CD4-positive, alpha-beta T cell (primary cell): ENCODE measurements at regions of chr5 and their contacts with region 1.

Region 1: DNA sequence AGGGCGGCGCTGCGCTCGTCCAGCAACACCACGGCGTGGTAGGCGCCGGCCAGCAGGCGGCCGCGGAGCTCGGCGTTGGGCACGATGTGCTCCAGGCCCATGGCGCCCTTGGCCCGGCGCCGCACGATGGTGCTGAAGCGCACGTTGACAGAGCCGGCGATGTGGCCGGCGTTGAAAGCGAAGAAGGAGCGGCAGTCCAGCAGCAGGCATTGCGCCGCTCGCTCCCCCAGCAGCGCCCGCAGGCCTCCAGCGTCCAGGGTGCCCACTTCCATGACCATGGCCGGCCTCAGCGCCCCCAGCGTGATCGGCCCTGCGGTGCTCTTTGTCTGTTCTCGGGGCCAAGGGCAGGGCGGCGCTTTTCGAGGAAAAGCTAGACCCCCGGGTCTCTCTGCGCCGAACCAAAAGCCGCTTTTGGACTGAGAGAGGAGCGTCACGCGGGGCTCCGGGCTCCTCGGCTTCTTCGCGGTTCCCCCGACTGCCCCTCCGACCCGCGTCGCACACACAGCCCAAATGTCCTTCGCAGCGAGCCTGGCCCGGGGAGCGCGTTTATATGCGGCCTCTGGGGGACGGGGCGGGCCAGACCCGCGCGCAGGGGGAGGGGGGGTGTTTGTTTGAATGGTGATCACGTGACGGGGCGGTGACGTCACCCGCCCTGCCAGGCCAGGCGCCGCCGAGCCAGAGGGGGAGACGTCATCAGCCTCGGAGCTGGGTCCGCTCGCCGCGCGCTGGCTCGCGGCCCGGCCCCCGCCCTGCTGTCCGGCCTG is at the start of gene DUSP1:
- DNase-seq: peak; percentile 96 to 100 (median 98)
- ATAC-seq: peak; percentile 45
- H3K4me3 ChIP-seq: peak within 1 kb of the TSS; percentile 95
- H3K4me3 Mint-ChIP-seq: peak within 1 kb of the TSS; percentile 99
- H3K27ac ChIP-seq: peak within 1 kb of the TSS; percentile 100
- H3K27ac Mint-ChIP-seq: peak within 1 kb of the TSS; percentile 95
- H3K4me1 ChIP-seq: peaks cover 87% of the 10 kb centered on the region
- H3K4me1 Mint-ChIP-seq: peaks cover 78% of the 10 kb centered on the region
- H3K27me3 ChIP-seq: no peaks in the 10 kb centered on the region
- H3K27me3 Mint-ChIP-seq: peaks cover 6% of the 10 kb centered on the region
- CTCF ChIP-seq: peak; percentile 33
- total RNA-seq, gene DUSP1: 761 to 768 TPM

Region 2: DNA sequence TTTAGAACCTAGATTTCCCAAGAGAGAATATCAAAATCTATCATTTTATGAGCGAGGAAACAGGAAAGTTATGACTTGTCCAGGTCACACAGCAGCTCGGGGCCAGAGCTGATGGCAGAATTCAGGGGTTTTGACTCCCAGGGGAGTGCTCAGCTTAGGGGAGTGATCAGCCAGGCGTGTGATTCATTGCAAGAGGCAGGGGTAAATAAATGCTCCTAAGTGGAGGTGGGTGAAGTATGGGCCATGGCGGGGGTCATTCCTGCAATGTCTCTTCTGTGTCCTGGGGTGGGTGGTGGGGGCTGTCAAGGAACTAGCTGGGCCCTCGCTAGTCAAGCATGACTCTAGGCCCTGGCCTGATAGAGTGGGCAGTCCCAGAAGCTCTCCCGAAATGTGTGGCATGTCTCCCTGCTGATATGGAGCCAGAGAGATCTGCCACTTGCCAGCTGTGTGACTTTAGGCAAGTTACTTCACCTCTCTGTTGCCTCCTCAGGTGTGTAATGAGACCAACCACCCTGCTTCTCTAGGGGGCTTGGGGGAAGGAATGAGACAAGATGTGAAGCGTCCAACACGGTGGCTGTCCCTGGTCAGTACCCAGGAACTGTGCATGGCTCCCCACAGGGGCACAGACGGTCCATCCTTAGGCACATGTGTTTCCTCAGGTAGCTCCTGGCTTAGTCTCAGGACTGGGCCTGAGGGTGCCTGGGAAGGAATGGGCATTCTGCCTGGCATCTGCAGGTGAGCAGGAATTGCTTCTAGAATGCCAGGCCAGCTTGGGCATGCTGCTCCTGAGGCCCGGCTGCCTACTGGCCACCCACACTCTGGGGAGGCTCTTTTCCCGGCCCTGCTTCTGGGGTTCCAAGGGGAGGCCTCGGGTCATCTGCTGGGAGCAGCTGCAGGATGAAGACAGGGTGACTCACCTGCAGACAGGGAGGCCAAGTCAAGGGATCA is 280.1 kb before region 1 on chr5:
- CTCF ChIA-PET with region 1: no interaction called
- POLR2A ChIA-PET with region 1: no interaction called
- intact Hi-C with region 1: no loop called
- DNase-seq: no peak
- ATAC-seq: no peak
- H3K4me3 ChIP-seq: no peak overlapping the region
- H3K4me3 Mint-ChIP-seq: no peak overlapping the region
- H3K27ac ChIP-seq: no peak overlapping the region
- H3K27ac Mint-ChIP-seq: no peak overlapping the region
- H3K4me1 ChIP-seq: no peaks in the 10 kb centered on the region
- H3K4me1 Mint-ChIP-seq: no peaks in the 10 kb centered on the region
- H3K27me3 ChIP-seq: no peaks in the 10 kb centered on the region
- H3K27me3 Mint-ChIP-seq: peaks cover 13% of the 10 kb centered on the region
- CTCF ChIP-seq: no peak

Region 3: GRCh38 chr5:172683696-172684471 is 87.0 kb before region 1 on chr5:
- CTCF ChIA-PET with region 1: no interaction called
- POLR2A ChIA-PET with region 1: interaction called, 18 read pairs
- intact Hi-C with region 1: no loop called
- DNase-seq: peak; percentile 34 to 89 (median 68)
- ATAC-seq: peak; percentile 83
- H3K4me3 ChIP-seq: peak overlapping the region; percentile 54
- H3K4me3 Mint-ChIP-seq: peak overlapping the region; percentile 81
- H3K27ac ChIP-seq: peak overlapping the region in 1 of 2 donors; percentile 52
- H3K27ac Mint-ChIP-seq: peak overlapping the region; percentile 85
- H3K4me1 ChIP-seq: peaks cover 10% of the 10 kb centered on the region
- H3K4me1 Mint-ChIP-seq: peaks cover 23% of the 10 kb centered on the region
- H3K27me3 ChIP-seq: no peaks in the 10 kb centered on the region
- H3K27me3 Mint-ChIP-seq: no peaks in the 10 kb centered on the region
- CTCF ChIP-seq: no peak

Region 4: GRCh38 chr5:172740428-172741201 is 30.2 kb before region 1 on chr5:
- CTCF ChIA-PET with region 1: no interaction called
- POLR2A ChIA-PET with region 1: no interaction called
- intact Hi-C with region 1: no loop called
- DNase-seq: peak in 2 of 14 experiments; percentile 48 to 63
- ATAC-seq: no peak
- H3K4me3 ChIP-seq: no peak overlapping the region
- H3K4me3 Mint-ChIP-seq: no peak overlapping the region
- H3K27ac ChIP-seq: peak overlapping the region in 1 of 2 donors; percentile 29
- H3K27ac Mint-ChIP-seq: no peak overlapping the region
- H3K4me1 ChIP-seq: peaks cover 13% of the 10 kb centered on the region
- H3K4me1 Mint-ChIP-seq: no peaks in the 10 kb centered on the region
- H3K27me3 ChIP-seq: no peaks in the 10 kb centered on the region
- H3K27me3 Mint-ChIP-seq: no peaks in the 10 kb centered on the region
- CTCF ChIP-seq: no peak

Region 5: GRCh38 chr5:172833686-172834414 is 63.0 kb after region 1 on chr5 and contains the start of gene ERGIC1:
- CTCF ChIA-PET with region 1: interaction called, 7 read pairs
- POLR2A ChIA-PET with region 1: interaction called, 110 read pairs
- intact Hi-C with region 1: loop called (anchors 2 kb)
- DNase-seq: peak; percentile 17 to 83 (median 52)
- ATAC-seq: peak; percentile 66
- H3K4me3 ChIP-seq: peak within 1 kb of the TSS; percentile 83
- H3K4me3 Mint-ChIP-seq: peak within 1 kb of the TSS; percentile 95
- H3K27ac ChIP-seq: peak within 1 kb of the TSS; percentile 41 to 78
- H3K27ac Mint-ChIP-seq: peak within 1 kb of the TSS; percentile 88
- H3K4me1 ChIP-seq: peaks cover 49% of the 10 kb centered on the region
- H3K4me1 Mint-ChIP-seq: peaks cover 45% of the 10 kb centered on the region
- H3K27me3 ChIP-seq: no peaks in the 10 kb centered on the region
- H3K27me3 Mint-ChIP-seq: no peaks in the 10 kb centered on the region
- CTCF ChIP-seq: no peak
- total RNA-seq, gene ERGIC1: 51.0 to 52.4 TPM

Region 6: DNA sequence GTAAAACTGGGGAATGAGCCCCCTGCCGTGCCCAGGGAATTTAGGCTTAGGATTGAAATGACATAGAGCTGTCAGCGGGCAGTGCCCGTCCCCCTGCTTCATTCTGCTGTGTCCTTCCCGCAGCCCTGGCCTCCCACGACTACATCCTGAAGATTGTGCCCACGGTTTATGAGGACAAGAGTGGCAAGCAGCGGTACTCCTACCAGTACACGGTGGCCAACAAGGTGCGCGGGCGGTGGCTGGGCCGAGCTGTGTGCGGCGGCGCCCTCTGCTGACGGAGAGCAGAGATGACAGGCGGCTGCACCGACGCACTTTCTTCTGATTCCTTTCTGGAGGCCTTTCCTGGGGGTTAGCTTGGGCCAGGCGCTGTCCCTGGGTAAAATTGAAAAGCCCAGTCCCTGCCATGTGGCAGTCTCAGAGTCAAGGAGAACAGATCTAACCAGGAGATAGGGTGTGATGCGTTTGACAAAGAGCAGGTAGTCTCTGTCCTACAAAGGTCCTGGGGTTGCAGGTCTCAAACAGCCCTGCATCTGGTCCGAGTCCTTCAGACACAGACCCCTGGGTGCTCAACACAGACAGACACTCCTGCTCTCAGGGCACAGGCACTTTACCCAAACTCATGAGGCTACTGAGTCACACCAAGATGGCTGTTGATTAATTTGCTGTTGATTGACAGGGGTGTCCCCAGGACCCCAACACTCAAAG is 161.6 kb after region 1 on chr5:
- CTCF ChIA-PET with region 1: interaction called, 18 read pairs
- POLR2A ChIA-PET with region 1: interaction called, 27 read pairs
- intact Hi-C with region 1: loop called (anchors 1 to 5 kb)
- DNase-seq: peak; percentile 61 to 87 (median 70)
- ATAC-seq: peak; percentile 99
- H3K4me3 ChIP-seq: no peak overlapping the region
- H3K4me3 Mint-ChIP-seq: no peak overlapping the region
- H3K27ac ChIP-seq: no peak overlapping the region
- H3K27ac Mint-ChIP-seq: peak overlapping the region; percentile 23
- H3K4me1 ChIP-seq: peaks cover 6% of the 10 kb centered on the region
- H3K4me1 Mint-ChIP-seq: peaks cover 7% of the 10 kb centered on the region
- H3K27me3 ChIP-seq: no peaks in the 10 kb centered on the region
- H3K27me3 Mint-ChIP-seq: no peaks in the 10 kb centered on the region
- CTCF ChIP-seq: peak; percentile 87

Region 7: DNA sequence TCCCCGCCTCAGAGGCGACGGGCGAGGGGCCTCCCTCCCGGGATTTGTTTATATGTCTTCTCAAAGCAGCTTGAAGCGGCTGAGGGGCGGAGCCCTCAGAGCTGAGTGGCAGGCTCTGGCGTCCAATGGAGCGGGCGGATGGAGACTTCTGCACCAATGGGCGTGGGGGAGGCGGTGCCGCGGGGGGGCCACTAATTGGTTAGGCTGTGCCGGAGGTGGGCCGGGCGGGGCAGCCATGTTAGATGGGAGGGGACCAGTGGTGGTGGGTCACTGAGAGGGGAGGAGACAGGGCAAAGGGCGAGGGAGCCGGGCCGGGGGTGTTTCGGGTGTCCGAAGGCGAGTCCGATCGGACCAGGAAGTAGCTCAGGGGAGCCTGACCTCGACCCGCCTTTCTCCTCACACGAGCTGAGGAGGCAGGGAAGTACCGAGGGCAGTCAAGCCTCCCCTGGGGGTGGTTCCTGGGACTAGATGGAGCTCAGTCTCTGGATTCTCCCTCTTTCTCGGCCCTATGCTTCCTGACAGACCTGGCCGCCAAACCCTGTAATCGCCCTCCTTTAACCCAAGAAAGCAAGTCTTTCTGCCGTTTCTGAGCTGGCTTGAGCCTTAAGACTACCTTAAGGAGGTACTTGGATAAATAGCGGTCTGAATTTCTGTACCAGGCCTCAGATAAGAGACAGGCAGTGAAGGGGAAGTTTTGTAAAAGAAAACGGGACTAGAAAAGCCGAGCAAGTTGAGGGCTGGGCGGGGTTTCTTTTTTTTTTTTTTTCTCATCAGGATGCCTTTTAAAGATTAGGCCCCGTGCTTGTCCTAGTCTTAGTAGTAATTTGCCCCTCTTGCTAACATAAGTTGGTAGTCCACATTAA is 286.4 kb after region 1 on chr5:
- CTCF ChIA-PET with region 1: no interaction called
- POLR2A ChIA-PET with region 1: interaction called, 11 read pairs
- intact Hi-C with region 1: loop called (anchors 5 to 10 kb)
- DNase-seq: peak; percentile 96 to 99 (median 98)
- ATAC-seq: peak; percentile 80
- H3K4me3 ChIP-seq: peak overlapping the region; percentile 69
- H3K4me3 Mint-ChIP-seq: peak overlapping the region; percentile 98
- H3K27ac ChIP-seq: peak overlapping the region; percentile 91 to 97
- H3K27ac Mint-ChIP-seq: peak overlapping the region; percentile 97
- H3K4me1 ChIP-seq: peaks cover 27% of the 10 kb centered on the region
- H3K4me1 Mint-ChIP-seq: peaks cover 70% of the 10 kb centered on the region
- H3K27me3 ChIP-seq: no peaks in the 10 kb centered on the region
- H3K27me3 Mint-ChIP-seq: no peaks in the 10 kb centered on the region
- CTCF ChIP-seq: no peak